ENCODE measurements at regions of chr17 and their contacts with region 1.

Region 1: GRCh38 chr17:78970834-78971773 is 8.6 kb downstream of the LGALS3BP start:
- DNase-seq: peak; percentile 83 to 91
- ATAC-seq: peak; percentile 45 to 81
- H3K4me3 ChIP-seq: no peak overlapping the region
- H3K27ac ChIP-seq: peak overlapping the region; percentile 31 to 76
- H3K4me1 ChIP-seq: peaks cover 20% of the 10 kb centered on the region; the same call in 2 of the 3 replicates
- CTCF ChIP-seq: peak; percentile 98
- EP300 ChIP-seq: no peak
- POLR2A ChIP-seq: no peak
- RAD21 ChIP-seq: peak; percentile 96

Region 2: GRCh38 chr17:78806451-78806850 is 164.7 kb before region 1 on chr17:
- CTCF ChIA-PET with region 1: interaction called, 10 read pairs
- POLR2A ChIA-PET with region 1: no interaction called
- DNase-seq: peak; percentile 27 to 53
- ATAC-seq: peak; percentile 53 to 63
- H3K4me3 ChIP-seq: no peak overlapping the region
- H3K27ac ChIP-seq: no peak overlapping the region
- H3K4me1 ChIP-seq: no peaks in the 10 kb centered on the region
- CTCF ChIP-seq: no peak
- EP300 ChIP-seq: no peak
- POLR2A ChIP-seq: no peak
- RAD21 ChIP-seq: no peak

Region 3: GRCh38 chr17:78865682-78866390 is 105.3 kb before region 1 on chr17:
- CTCF ChIA-PET with region 1: interaction called, 321 read pairs
- POLR2A ChIA-PET with region 1: interaction called, 3 read pairs
- DNase-seq: peak; percentile 77 to 83
- ATAC-seq: peak; percentile 72 to 79
- H3K4me3 ChIP-seq: no peak overlapping the region
- H3K27ac ChIP-seq: peak overlapping the region; percentile 24 to 71; a peak in 3 of 6 replicates
- H3K4me1 ChIP-seq: peaks cover 46% of the 10 kb centered on the region
- CTCF ChIP-seq: peak; percentile 95
- EP300 ChIP-seq: no peak
- POLR2A ChIP-seq: no peak
- RAD21 ChIP-seq: peak; percentile 88 to 93

Region 4: GRCh38 chr17:78896091-78896833 is 74.8 kb before region 1 on chr17:
- CTCF ChIA-PET with region 1: interaction called, 29 read pairs
- POLR2A ChIA-PET with region 1: no interaction called
- DNase-seq: no peak
- ATAC-seq: peak; percentile 24 to 27; a peak in 2 of 6 replicates
- H3K4me3 ChIP-seq: no peak overlapping the region
- H3K27ac ChIP-seq: no peak overlapping the region
- H3K4me1 ChIP-seq: 0 out of 3 replicates have a peak, but pooled peaks cover 3% of the 10 kb centered on the region
- CTCF ChIP-seq: no peak
- EP300 ChIP-seq: no peak
- POLR2A ChIP-seq: no peak
- RAD21 ChIP-seq: no peak

Region 5: DNA sequence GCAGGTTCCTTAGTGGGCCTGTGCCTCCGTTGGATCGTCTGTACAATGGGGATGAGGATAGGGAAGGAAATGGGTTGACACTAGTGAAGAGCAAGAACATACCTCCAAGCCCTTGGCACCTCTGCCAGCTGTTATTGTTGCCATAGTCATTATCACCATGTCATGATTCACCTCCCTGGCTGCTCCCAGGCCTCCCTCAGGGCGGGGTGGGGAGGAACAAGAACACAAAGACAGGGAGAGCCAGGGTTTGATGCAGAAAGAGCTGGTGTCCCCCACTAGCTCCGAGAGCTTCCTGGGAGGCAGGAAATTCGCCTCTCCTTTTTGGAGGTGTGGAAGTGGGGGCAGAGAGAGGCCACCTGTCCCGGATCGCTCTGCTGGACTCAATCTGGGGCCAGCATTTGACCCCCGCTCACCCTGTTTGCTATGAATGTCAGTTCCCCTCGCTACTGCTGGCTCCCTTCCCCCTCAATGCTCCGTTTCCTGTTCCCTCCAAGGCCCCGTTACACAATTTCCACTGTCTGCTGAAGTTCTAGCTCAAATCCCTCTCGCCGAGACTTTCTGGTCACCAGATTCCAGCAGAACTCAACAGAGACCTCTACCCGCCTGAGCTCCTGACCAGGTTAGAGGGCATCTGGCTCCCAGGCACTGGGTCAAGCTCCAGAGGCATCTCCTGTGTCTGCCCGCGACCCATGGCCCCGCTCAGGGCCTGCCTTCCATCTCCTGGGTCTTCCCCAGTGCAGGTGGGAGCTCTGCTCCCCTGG is 55.1 kb before region 1 on chr17:
- CTCF ChIA-PET with region 1: interaction called, 27 read pairs
- POLR2A ChIA-PET with region 1: no interaction called
- DNase-seq: peak; percentile 50 to 74
- ATAC-seq: peak; percentile 66 to 72
- H3K4me3 ChIP-seq: 0 out of 3 replicates have a peak overlapping the region, but pooled peaks have one; percentile 16
- H3K27ac ChIP-seq: peak overlapping the region; percentile 73 to 77
- H3K4me1 ChIP-seq: peaks cover 49% of the 10 kb centered on the region
- CTCF ChIP-seq: no peak
- EP300 ChIP-seq: no peak
- POLR2A ChIP-seq: no peak
- RAD21 ChIP-seq: no peak

Region 6: GRCh38 chr17:78947235-78948127 is 23.6 kb before region 1 on chr17:
- CTCF ChIA-PET with region 1: interaction called, 169 read pairs
- POLR2A ChIA-PET with region 1: no interaction called
- DNase-seq: no peak
- ATAC-seq: peak in 1 of 2 experiments; percentile 30; a peak in 2 of 6 replicates
- H3K4me3 ChIP-seq: no peak overlapping the region
- H3K27ac ChIP-seq: peak overlapping the region in 1 of 2 experiments; percentile 51; a peak in 2 of 6 replicates
- H3K4me1 ChIP-seq: no peaks in the 10 kb centered on the region; the same call in 2 of the 3 replicates
- CTCF ChIP-seq: no peak
- EP300 ChIP-seq: no peak
- POLR2A ChIP-seq: no peak
- RAD21 ChIP-seq: no peak

Region 7: GRCh38 chr17:79137015-79137788 is 166.1 kb after region 1 on chr17:
- CTCF ChIA-PET with region 1: no interaction called
- POLR2A ChIA-PET with region 1: no interaction called
- DNase-seq: no peak
- ATAC-seq: no peak
- H3K4me3 ChIP-seq: no peak overlapping the region
- H3K27ac ChIP-seq: no peak overlapping the region
- H3K4me1 ChIP-seq: no peaks in the 10 kb centered on the region
- CTCF ChIP-seq: no peak
- EP300 ChIP-seq: no peak
- POLR2A ChIP-seq: no peak
- RAD21 ChIP-seq: no peak

Region 8: DNA sequence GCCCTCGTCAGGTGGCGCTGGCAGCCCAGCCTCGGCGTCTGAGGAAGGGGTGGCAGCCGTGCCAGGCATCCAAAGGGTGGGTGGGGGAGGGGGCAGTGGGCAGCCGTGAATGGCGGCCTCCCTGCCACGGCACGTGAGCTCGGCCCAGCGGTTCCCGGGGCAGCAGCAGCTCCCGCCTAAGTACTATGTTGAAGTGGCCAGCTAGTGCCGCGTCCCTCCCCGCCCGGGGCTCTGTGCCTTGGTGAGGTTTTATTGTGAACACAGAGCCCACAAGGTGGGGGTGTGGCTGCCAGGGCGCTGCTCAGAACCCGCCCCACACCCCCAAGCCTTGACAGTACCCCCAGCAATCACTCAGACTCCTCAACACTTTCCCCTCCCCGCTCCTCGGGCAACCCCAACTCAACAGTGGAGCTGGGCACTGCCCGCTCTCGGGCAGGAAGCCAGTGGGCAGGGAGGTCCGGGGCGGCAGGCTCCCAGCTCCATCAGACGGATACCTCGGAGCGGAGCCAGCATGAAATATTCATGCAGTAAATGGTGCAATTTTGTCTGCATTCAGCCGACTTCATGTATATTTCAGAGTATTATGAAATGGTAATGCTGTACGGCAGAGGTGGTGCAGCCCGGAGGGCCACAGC is 184.0 kb after region 1 on chr17:
- CTCF ChIA-PET with region 1: no interaction called
- POLR2A ChIA-PET with region 1: no interaction called
- DNase-seq: no peak
- ATAC-seq: no peak
- H3K4me3 ChIP-seq: no peak overlapping the region
- H3K27ac ChIP-seq: no peak overlapping the region
- H3K4me1 ChIP-seq: peaks cover 9% of the 10 kb centered on the region; the same call in 1 of the 3 replicates
- CTCF ChIP-seq: no peak
- EP300 ChIP-seq: no peak
- POLR2A ChIP-seq: no peak
- RAD21 ChIP-seq: no peak

Region 9: GRCh38 chr17:79242873-79243602 is 271.9 kb after region 1 on chr17:
- CTCF ChIA-PET with region 1: no interaction called
- POLR2A ChIA-PET with region 1: no interaction called
- DNase-seq: no peak
- ATAC-seq: no peak
- H3K4me3 ChIP-seq: no peak overlapping the region
- H3K27ac ChIP-seq: no peak overlapping the region
- H3K4me1 ChIP-seq: no peaks in the 10 kb centered on the region
- CTCF ChIP-seq: no peak
- EP300 ChIP-seq: no peak
- POLR2A ChIP-seq: no peak
- RAD21 ChIP-seq: no peak

Measured in A549 (cell line).